CD4-positive, alpha-beta T cell (primary cell): ENCODE measurements at regions of chr2 and their contacts with region 1.

Region 1: GRCh38 chr2:109466673-109467575 is 146.8 kb downstream of the SEPTIN10 start:
- DNase-seq: no peak
- ATAC-seq: no peak
- H3K4me3 ChIP-seq: no peak overlapping the region
- H3K4me3 Mint-ChIP-seq: no peak overlapping the region
- H3K27ac ChIP-seq: no peak overlapping the region
- H3K27ac Mint-ChIP-seq: no peak overlapping the region
- H3K4me1 ChIP-seq: no peaks in the 10 kb centered on the region
- H3K4me1 Mint-ChIP-seq: no peaks in the 10 kb centered on the region
- H3K27me3 ChIP-seq: no peaks in the 10 kb centered on the region
- H3K27me3 Mint-ChIP-seq: no peaks in the 10 kb centered on the region
- CTCF ChIP-seq: no peak

Region 2: GRCh38 chr2:109486711-109487535 is 20.0 kb after region 1 on chr2:
- CTCF ChIA-PET with region 1: no interaction called
- POLR2A ChIA-PET with region 1: no interaction called
- intact Hi-C with region 1: loop called in 1 of 2 experiments (anchors 1 kb)
- DNase-seq: no peak
- ATAC-seq: no peak
- H3K4me3 ChIP-seq: no peak overlapping the region
- H3K4me3 Mint-ChIP-seq: no peak overlapping the region
- H3K27ac ChIP-seq: no peak overlapping the region
- H3K27ac Mint-ChIP-seq: no peak overlapping the region
- H3K4me1 ChIP-seq: no peaks in the 10 kb centered on the region
- H3K4me1 Mint-ChIP-seq: no peaks in the 10 kb centered on the region
- H3K27me3 ChIP-seq: no peaks in the 10 kb centered on the region
- H3K27me3 Mint-ChIP-seq: no peaks in the 10 kb centered on the region
- CTCF ChIP-seq: no peak